Calu3 (cell line): ENCODE measurements at regions of chr14 and their contacts with region 1.

Region 1: DNA sequence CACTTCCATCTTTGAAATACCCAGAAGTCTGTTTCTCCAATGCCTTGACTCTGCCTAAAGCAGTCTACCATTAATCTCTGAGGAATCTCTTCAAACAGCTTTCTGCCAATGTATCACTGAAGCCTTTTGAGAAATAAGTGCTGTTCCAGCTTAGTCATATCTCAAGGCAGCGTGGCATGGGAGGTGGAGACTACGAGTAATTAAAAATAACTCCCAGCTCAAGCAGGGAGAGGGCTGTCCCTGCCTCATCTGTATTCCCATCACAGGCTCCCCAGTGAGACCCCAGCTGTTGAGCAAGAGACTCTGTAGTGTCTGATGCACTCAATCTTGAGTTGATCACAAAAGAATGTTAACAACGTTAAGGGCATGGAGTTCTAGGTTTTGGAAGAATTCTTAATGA is 700.6 kb downstream of the DIO2 start:
- DNase-seq: no peak
- H3K4me3 Mint-ChIP-seq: no peak overlapping the region
- H3K27ac Mint-ChIP-seq: no peak overlapping the region
- H3K4me1 Mint-ChIP-seq: no peaks in the 10 kb centered on the region
- H3K27me3 Mint-ChIP-seq: no peaks in the 10 kb centered on the region
- CTCF ChIP-seq: no peak

Region 2: GRCh38 chr14:79483477-79484388 is 26.9 kb before region 1 on chr14:
- CTCF ChIA-PET with region 1: no interaction called
- intact Hi-C with region 1: no loop called
- DNase-seq: no peak
- H3K4me3 Mint-ChIP-seq: no peak overlapping the region
- H3K27ac Mint-ChIP-seq: no peak overlapping the region
- H3K4me1 Mint-ChIP-seq: peaks cover 6% of the 10 kb centered on the region
- H3K27me3 Mint-ChIP-seq: no peaks in the 10 kb centered on the region
- CTCF ChIP-seq: no peak

Region 3: DNA sequence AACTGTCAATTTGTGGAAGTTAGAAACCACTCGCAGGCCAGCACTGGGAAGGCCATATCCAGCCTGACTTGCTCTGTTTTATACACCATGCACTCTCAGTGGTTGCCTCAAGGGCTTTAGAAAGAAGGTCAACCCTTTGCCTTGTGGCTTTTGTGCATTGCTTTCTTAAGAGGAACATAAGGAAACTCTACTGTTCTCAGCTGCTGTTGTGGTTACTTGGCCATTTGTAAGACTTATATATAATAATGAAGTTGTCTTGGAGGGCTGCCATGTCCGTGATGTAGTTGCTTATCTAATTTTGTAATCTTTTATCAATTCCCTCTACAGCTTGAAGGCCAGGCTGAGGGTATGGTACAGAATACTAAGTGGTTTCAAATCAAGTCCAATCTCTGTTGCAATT is 62.8 kb after region 1 on chr14:
- CTCF ChIA-PET with region 1: no interaction called
- intact Hi-C with region 1: loop called (anchors 2 kb)
- DNase-seq: no peak
- H3K4me3 Mint-ChIP-seq: no peak overlapping the region
- H3K27ac Mint-ChIP-seq: no peak overlapping the region
- H3K4me1 Mint-ChIP-seq: no peaks in the 10 kb centered on the region
- H3K27me3 Mint-ChIP-seq: no peaks in the 10 kb centered on the region
- CTCF ChIP-seq: no peak

Region 4: GRCh38 chr14:79584679-79585078 is 74.0 kb after region 1 on chr14:
- CTCF ChIA-PET with region 1: no interaction called
- intact Hi-C with region 1: no loop called
- DNase-seq: peak; percentile 1
- H3K4me3 Mint-ChIP-seq: no peak overlapping the region
- H3K27ac Mint-ChIP-seq: no peak overlapping the region
- H3K4me1 Mint-ChIP-seq: no peaks in the 10 kb centered on the region
- H3K27me3 Mint-ChIP-seq: no peaks in the 10 kb centered on the region
- CTCF ChIP-seq: no peak

Region 5: GRCh38 chr14:79596531-79596930 is 85.9 kb after region 1 on chr14:
- CTCF ChIA-PET with region 1: no interaction called
- intact Hi-C with region 1: no loop called
- DNase-seq: no peak
- H3K4me3 Mint-ChIP-seq: no peak overlapping the region
- H3K27ac Mint-ChIP-seq: no peak overlapping the region
- H3K4me1 Mint-ChIP-seq: no peaks in the 10 kb centered on the region
- H3K27me3 Mint-ChIP-seq: no peaks in the 10 kb centered on the region
- CTCF ChIP-seq: no peak